ENCODE measurements at regions of chr12 and their contacts with region 1.

Region 1: DNA sequence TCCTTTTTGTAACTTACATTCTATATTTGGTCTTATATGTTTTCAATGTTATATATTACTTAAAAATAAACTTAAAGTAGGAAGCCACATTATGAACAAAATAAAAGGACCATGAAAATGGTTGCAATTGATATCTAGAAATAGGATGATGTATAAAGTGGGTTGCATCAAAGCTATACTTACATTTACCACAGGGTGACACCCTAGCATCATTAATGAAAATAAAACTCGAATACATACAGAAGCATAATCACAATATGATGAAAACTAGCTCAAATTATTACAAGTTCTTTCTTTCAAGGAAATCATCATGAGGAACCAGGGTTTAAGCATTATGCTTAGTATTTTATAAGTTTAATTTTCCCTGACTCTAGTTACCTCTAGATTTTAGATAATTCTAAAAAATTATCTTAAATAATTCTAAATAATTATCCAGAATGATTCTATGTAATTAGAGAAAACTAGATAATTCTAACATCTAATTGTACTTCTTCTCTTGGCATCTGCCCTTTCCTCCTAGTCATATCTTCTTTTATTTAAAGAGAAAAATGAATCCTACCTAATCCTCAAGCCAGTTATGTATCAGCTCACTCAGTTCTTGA is 31.2 kb downstream of the TAS2R7 start:
- DNase-seq: peak; percentile 20
- H3K4me3 ChIP-seq: no peak overlapping the region
- H3K27ac ChIP-seq: no peak overlapping the region
- H3K4me1 ChIP-seq: no peaks in the 10 kb centered on the region
- H3K27me3 ChIP-seq: peaks cover 16% of the 10 kb centered on the region
- CTCF ChIP-seq: peak; percentile 68 to 74

Region 2: GRCh38 chr12:11186837-11187236 is 415.6 kb after region 1 on chr12 and contains the start of gene TAS2R42:
- CTCF ChIA-PET with region 1: no interaction called
- dilution Hi-C with region 1: no loop called
- in situ Hi-C with region 1: loop called in 1 of 2 experiments (anchors 5 kb)
- intact Hi-C with region 1: no loop called
- DNase-seq: no peak
- H3K4me3 ChIP-seq: no peak within 1 kb of the TSS
- H3K27ac ChIP-seq: no peak within 1 kb of the TSS
- H3K4me1 ChIP-seq: no peaks in the 10 kb centered on the region
- H3K27me3 ChIP-seq: no peaks in the 10 kb centered on the region
- CTCF ChIP-seq: no peak
- total RNA-seq, gene TAS2R42: not detected

Region 3: GRCh38 chr12:11202811-11203210 is 431.6 kb after region 1 on chr12:
- CTCF ChIA-PET with region 1: interaction called, 6 read pairs
- dilution Hi-C with region 1: no loop called
- in situ Hi-C with region 1: loop called in 1 of 2 experiments (anchors 10 kb)
- intact Hi-C with region 1: loop called (anchors 1 kb)
- DNase-seq: no peak
- H3K4me3 ChIP-seq: no peak overlapping the region
- H3K27ac ChIP-seq: no peak overlapping the region
- H3K4me1 ChIP-seq: no peaks in the 10 kb centered on the region
- H3K27me3 ChIP-seq: no peaks in the 10 kb centered on the region
- CTCF ChIP-seq: no peak

Region 4: DNA sequence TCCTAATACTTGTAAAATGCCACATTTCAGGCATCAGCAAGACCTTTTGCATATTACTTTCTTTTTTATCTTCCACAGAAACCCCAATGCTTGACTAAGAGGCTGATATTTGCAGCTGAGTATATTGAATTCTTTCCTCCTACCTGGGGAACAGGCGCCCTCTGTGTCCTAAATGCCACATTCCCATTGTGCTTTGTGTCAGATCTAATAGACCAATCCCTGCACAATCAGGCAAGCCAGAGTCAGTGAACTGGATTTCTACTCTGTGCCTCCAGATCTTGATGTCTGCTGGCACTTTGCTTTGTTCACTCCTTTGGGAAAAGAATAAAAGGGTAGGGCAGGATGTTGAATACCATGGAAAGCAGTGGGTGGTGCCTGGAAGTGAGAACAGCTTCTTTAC is 437.9 kb after region 1 on chr12:
- CTCF ChIA-PET with region 1: no interaction called
- dilution Hi-C with region 1: no loop called
- in situ Hi-C with region 1: loop called in 1 of 2 experiments (anchors 10 kb)
- intact Hi-C with region 1: no loop called
- DNase-seq: no peak
- H3K4me3 ChIP-seq: no peak overlapping the region
- H3K27ac ChIP-seq: no peak overlapping the region
- H3K4me1 ChIP-seq: no peaks in the 10 kb centered on the region
- H3K27me3 ChIP-seq: no peaks in the 10 kb centered on the region
- CTCF ChIP-seq: peak in 1 of 2 donors; percentile 10

Region 5: DNA sequence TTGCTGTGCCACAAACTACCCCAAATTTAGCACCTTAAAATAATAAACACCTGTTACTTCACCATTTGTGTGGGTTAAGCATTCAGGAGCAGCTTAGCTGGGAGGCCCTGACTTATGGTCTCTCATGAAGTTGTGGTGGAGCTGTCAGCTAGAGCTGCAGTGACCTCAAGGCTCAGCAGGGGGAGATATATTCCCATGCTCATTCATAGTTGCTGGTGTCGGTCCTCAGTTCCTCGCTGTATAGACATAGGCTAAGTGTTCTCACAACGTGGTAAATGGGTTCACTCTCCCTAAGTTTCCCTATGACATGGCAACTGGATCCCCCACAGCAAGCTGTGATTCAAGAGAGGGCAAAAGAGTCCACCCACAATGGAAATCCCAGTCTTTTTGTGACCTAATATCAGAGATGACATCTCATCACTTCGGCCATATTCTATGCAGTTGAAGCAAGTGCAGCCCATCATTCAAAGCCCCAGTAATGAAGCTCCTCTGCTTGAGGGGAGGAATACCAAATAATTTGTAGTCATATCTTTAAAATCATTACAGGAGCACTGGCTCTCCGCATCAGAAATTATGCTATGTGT is 457.2 kb after region 1 on chr12:
- CTCF ChIA-PET with region 1: interaction called, 3 read pairs
- dilution Hi-C with region 1: loop called (anchors 25 kb)
- in situ Hi-C with region 1: no loop called
- intact Hi-C with region 1: loop called (anchors 1 kb)
- DNase-seq: peak; percentile 39
- H3K4me3 ChIP-seq: no peak overlapping the region
- H3K27ac ChIP-seq: no peak overlapping the region
- H3K4me1 ChIP-seq: no peaks in the 10 kb centered on the region
- H3K27me3 ChIP-seq: no peaks in the 10 kb centered on the region
- CTCF ChIP-seq: peak; percentile 91 to 93

Region 6: DNA sequence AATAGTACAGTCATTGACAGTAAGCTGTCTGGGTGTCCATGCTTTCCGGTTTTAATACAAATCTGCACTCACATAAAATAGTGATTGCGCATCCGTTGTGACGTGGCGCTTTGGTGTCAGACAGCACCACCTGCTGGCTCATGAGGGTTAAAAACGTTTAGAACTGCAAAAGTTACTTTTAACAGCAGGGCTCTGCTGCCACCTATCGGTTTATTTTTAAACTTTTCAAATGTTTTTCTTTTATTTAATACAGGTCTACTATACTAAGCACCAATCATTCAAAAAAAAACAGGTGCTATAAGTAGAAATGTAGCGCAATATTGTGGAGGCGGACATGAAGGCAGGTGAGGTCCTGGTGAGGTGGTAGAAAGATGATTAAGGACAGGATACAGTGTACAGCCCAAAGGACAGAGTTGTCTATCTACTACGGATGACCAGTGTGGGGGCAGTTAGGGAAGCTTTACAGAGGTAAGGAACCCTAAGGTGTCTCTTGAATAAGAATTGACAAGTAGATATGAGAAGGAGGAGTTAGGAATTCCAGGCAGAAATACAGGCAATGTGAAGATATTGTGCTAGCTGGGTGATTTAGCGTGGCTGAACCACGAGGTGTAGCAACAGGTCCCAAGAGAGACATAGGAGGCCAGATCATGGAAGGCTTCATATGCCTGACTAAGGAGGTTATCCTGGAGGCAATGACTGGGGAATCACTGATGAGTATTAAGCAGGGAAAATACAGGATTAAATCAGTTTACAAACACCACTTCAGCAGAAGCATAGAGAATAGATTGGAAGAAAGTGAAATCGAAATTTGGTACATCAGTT is 715.6 kb after region 1 on chr12:
- CTCF ChIA-PET with region 1: interaction called, 5 read pairs
- dilution Hi-C with region 1: no loop called
- in situ Hi-C with region 1: loop called (anchors 5 to 10 kb)
- intact Hi-C with region 1: loop called (anchors 1 kb)
- DNase-seq: peak; percentile 60
- H3K4me3 ChIP-seq: no peak overlapping the region
- H3K27ac ChIP-seq: no peak overlapping the region
- H3K4me1 ChIP-seq: no peaks in the 10 kb centered on the region
- H3K27me3 ChIP-seq: no peaks in the 10 kb centered on the region
- CTCF ChIP-seq: peak; percentile 93

Measured in mammary epithelial cell (primary cell).